MCF 10A (cell line): ENCODE measurements at regions of chr2 and their contacts with region 1.

Region 1: GRCh38 chr2:218898109-218898878 is 17.6 kb downstream of the WNT10A start:
- DNase-seq: peak; percentile 53
- H3K4me3 Mint-ChIP-seq: no peak overlapping the region
- H3K27ac Mint-ChIP-seq: no peak overlapping the region
- H3K4me1 Mint-ChIP-seq: peaks cover 43% of the 10 kb centered on the region
- H3K27me3 Mint-ChIP-seq: peaks cover 23% of the 10 kb centered on the region
- CTCF ChIP-seq: peak; percentile 97

Region 2: GRCh38 chr2:218860950-218861381 is 37.3 kb before region 1 on chr2:
- CTCF ChIA-PET with region 1: interaction called, 61 read pairs
- POLR2A ChIA-PET with region 1: interaction called, 4 read pairs
- intact Hi-C with region 1: no loop called
- DNase-seq: no peak
- H3K4me3 Mint-ChIP-seq: no peak overlapping the region
- H3K27ac Mint-ChIP-seq: no peak overlapping the region
- H3K4me1 Mint-ChIP-seq: peaks cover 5% of the 10 kb centered on the region
- H3K27me3 Mint-ChIP-seq: peaks cover 70% of the 10 kb centered on the region
- CTCF ChIP-seq: no peak

Region 3: DNA sequence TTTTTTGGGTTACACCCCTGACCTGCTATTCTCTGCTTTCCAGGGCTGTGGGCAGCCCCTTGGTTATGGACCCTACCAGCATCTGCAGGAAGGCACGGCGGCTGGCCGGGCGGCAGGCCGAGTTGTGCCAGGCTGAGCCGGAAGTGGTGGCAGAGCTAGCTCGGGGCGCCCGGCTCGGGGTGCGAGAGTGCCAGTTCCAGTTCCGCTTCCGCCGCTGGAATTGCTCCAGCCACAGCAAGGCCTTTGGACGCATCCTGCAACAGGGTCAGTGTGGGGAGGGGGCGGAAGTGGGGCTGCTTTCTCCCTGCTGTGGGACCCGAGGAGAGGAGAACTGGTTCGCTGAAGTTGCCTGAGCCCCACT is 27.3 kb before region 1 on chr2:
- CTCF ChIA-PET with region 1: interaction called, 839 read pairs
- POLR2A ChIA-PET with region 1: interaction called, 237 read pairs
- intact Hi-C with region 1: loop called (anchors 1 kb)
- DNase-seq: no peak
- H3K4me3 Mint-ChIP-seq: no peak overlapping the region
- H3K27ac Mint-ChIP-seq: no peak overlapping the region
- H3K4me1 Mint-ChIP-seq: no peaks in the 10 kb centered on the region
- H3K27me3 Mint-ChIP-seq: peaks cover 25% of the 10 kb centered on the region
- CTCF ChIP-seq: no peak

Region 4: GRCh38 chr2:218908721-218909619 is 10.7 kb after region 1 on chr2:
- CTCF ChIA-PET with region 1: interaction called, 16 read pairs
- POLR2A ChIA-PET with region 1: interaction called, 3 read pairs
- intact Hi-C with region 1: no loop called
- DNase-seq: peak; percentile 87
- H3K4me3 Mint-ChIP-seq: peak overlapping the region; percentile 76
- H3K27ac Mint-ChIP-seq: peak overlapping the region; percentile 35
- H3K4me1 Mint-ChIP-seq: peaks cover 6% of the 10 kb centered on the region
- H3K27me3 Mint-ChIP-seq: peaks cover 26% of the 10 kb centered on the region
- CTCF ChIP-seq: no peak